ENCODE measurements at regions of chr9 and their contacts with region 1.

Region 1: GRCh38 chr9:137029058-137029936 is 1.3 kb upstream of the ABCA2 start:
- DNase-seq: peak; percentile 49 to 82 (median 64)
- ATAC-seq: peak; percentile 27
- H3K4me3 ChIP-seq: peak overlapping the region; percentile 68
- H3K4me3 Mint-ChIP-seq: peak overlapping the region; percentile 90
- H3K27ac ChIP-seq: peak overlapping the region in 1 of 2 donors; percentile 7
- H3K27ac Mint-ChIP-seq: peak overlapping the region; percentile 55
- H3K4me1 ChIP-seq: peaks cover 82% of the 10 kb centered on the region
- H3K4me1 Mint-ChIP-seq: peaks cover 44% of the 10 kb centered on the region
- H3K27me3 ChIP-seq: no peaks in the 10 kb centered on the region
- H3K27me3 Mint-ChIP-seq: no peaks in the 10 kb centered on the region
- CTCF ChIP-seq: peak; percentile 67

Region 2: DNA sequence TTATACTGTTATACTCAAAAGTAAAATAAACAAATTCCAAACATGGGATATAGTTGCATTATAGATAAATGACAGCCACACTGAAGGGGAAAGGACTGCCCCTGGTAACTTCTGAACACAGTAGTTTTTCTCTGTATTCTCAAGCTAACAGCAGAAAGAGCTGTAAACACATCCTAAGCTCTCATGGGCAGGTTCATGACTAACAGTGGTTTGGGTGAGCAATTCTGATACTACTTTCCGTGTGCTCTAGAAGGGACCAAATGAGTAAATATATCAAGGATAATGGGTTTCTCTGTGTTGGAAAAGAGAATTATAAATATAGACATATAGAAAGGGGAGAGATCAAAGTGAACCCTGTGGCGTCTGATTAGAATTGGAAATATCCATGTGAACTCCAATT is 278.8 kb before region 1 on chr9:
- CTCF ChIA-PET with region 1: no interaction called
- POLR2A ChIA-PET with region 1: no interaction called
- intact Hi-C with region 1: no loop called
- DNase-seq: no peak
- ATAC-seq: no peak
- H3K4me3 ChIP-seq: no peak overlapping the region
- H3K4me3 Mint-ChIP-seq: no peak overlapping the region
- H3K27ac ChIP-seq: no peak overlapping the region
- H3K27ac Mint-ChIP-seq: no peak overlapping the region
- H3K4me1 ChIP-seq: no peaks in the 10 kb centered on the region
- H3K4me1 Mint-ChIP-seq: no peaks in the 10 kb centered on the region
- H3K27me3 ChIP-seq: peaks cover 0 to 2% of the 10 kb centered on the region in 2 experiments
- H3K27me3 Mint-ChIP-seq: peaks cover 15% of the 10 kb centered on the region
- CTCF ChIP-seq: no peak

Region 3: DNA sequence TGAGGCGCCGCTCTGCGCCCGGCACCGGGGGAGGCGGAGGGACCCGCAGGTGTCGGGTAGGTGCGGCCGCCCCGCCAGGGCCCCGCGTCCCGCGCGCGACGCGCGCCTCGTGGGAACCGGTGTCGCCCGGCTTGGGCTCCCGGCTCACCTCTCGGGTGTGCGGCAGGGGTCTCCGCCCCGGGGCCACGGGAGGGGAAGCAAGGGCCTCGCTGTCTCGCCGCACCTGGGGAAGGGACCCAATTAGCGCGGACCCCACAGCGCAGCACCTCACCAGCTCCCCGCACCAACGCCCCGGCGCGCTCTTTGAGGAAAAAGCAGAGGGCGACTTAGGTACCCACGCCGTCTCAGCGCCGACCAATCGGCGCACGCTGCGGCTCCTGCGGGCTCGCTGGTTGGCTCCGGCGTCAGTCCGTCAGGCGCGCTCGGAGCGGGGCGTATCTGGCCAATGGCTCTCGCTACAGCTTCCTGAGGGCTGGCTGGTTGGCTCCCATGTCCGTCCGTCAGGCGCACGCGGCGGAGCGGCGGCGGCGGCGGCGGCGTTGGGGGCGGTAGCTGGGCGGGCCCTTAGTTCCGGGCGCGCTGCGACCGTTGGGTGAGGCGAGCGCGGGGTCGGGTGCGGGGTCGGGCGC is 143.2 kb before region 1 on chr9 and contains the start of gene TRAF2:
- CTCF ChIA-PET with region 1: no interaction called
- POLR2A ChIA-PET with region 1: interaction called, 6 read pairs
- intact Hi-C with region 1: loop called in 1 of 2 experiments (anchors 5 kb)
- DNase-seq: peak; percentile 92 to 99 (median 96)
- ATAC-seq: peak; percentile 92
- H3K4me3 ChIP-seq: peak within 1 kb of the TSS; percentile 85
- H3K4me3 Mint-ChIP-seq: peak within 1 kb of the TSS; percentile 88
- H3K27ac ChIP-seq: peak within 1 kb of the TSS; percentile 81 to 95
- H3K27ac Mint-ChIP-seq: peak within 1 kb of the TSS; percentile 92
- H3K4me1 ChIP-seq: peaks cover 68% of the 10 kb centered on the region
- H3K4me1 Mint-ChIP-seq: peaks cover 26% of the 10 kb centered on the region
- H3K27me3 ChIP-seq: no peaks in the 10 kb centered on the region
- H3K27me3 Mint-ChIP-seq: no peaks in the 10 kb centered on the region
- CTCF ChIP-seq: no peak
- total RNA-seq, gene TRAF2: 10.6 to 11.6 TPM

Region 4: GRCh38 chr9:136949817-136950655 is 79.3 kb before region 1 on chr9:
- CTCF ChIA-PET with region 1: interaction called, 13 read pairs
- POLR2A ChIA-PET with region 1: interaction called, 3 read pairs
- intact Hi-C with region 1: loop called in 1 of 2 experiments (anchors 2 kb)
- DNase-seq: peak; percentile 93 to 97 (median 96)
- ATAC-seq: peak; percentile 97
- H3K4me3 ChIP-seq: peak overlapping the region; percentile 69
- H3K4me3 Mint-ChIP-seq: peak overlapping the region; percentile 83
- H3K27ac ChIP-seq: peak overlapping the region; percentile 56 to 75
- H3K27ac Mint-ChIP-seq: peak overlapping the region; percentile 86
- H3K4me1 ChIP-seq: peaks cover 38% of the 10 kb centered on the region
- H3K4me1 Mint-ChIP-seq: peaks cover 5% of the 10 kb centered on the region
- H3K27me3 ChIP-seq: no peaks in the 10 kb centered on the region
- H3K27me3 Mint-ChIP-seq: no peaks in the 10 kb centered on the region
- CTCF ChIP-seq: peak; percentile 42

Region 5: GRCh38 chr9:137046098-137046787 is 16.9 kb after region 1 on chr9 and contains the start of gene NPDC1:
- CTCF ChIA-PET with region 1: interaction called, 23 read pairs
- POLR2A ChIA-PET with region 1: interaction called, 6 read pairs
- intact Hi-C with region 1: no loop called
- DNase-seq: peak; percentile 67 to 90 (median 75)
- ATAC-seq: peak; percentile 87
- H3K4me3 ChIP-seq: peak within 1 kb of the TSS; percentile 55
- H3K4me3 Mint-ChIP-seq: peak within 1 kb of the TSS; percentile 51
- H3K27ac ChIP-seq: no peak within 1 kb of the TSS
- H3K27ac Mint-ChIP-seq: no peak within 1 kb of the TSS
- H3K4me1 ChIP-seq: peaks cover 44% of the 10 kb centered on the region
- H3K4me1 Mint-ChIP-seq: no peaks in the 10 kb centered on the region
- H3K27me3 ChIP-seq: peaks cover 68 to 69% of the 10 kb centered on the region in 2 experiments
- H3K27me3 Mint-ChIP-seq: peaks cover 44% of the 10 kb centered on the region
- CTCF ChIP-seq: peak; percentile 77
- total RNA-seq, gene NPDC1: 15.3 to 16.0 TPM

Region 6: DNA sequence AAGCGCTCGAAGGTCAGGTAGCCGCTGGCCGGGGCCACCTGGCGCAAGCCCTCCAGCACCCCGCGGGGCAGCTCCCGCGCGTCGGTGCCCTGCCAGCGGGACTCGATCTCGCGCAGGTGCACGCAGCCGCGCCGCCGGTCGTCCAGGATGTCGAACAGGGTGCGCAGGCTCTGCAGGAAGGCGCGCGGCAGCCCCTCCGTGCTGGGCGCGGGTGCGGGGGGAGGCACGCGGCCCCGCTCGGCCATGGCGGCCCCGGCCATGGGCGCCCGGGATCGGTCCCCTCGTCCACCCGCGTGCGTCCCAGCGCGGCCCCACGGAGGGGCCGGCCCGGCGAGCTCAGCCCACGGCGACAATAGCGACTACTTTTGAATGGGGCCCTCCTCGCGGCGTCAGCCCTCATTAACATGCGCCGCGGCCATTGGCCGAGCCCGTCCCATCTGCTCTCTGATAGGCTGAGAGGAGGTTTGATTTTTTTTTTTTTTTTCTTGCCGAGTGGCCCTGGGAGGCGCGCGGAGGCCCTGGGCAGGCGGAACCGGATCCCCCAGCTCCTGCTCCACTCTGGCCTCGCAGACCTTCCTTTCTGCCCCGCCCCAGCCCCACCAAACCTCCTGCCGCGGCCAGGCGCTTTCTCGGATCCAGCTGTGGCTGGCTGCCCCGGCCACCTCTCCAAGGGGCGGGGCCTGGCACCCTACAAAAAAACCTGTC is 41.1 kb after region 1 on chr9 and contains the start of gene SAPCD2:
- CTCF ChIA-PET with region 1: interaction called, 13 read pairs
- POLR2A ChIA-PET with region 1: no interaction called
- intact Hi-C with region 1: loop called in 1 of 2 experiments (anchors 2 kb)
- DNase-seq: peak; percentile 68 to 94 (median 78)
- ATAC-seq: peak; percentile 88
- H3K4me3 ChIP-seq: peak within 1 kb of the TSS; percentile 45
- H3K4me3 Mint-ChIP-seq: peak within 1 kb of the TSS; percentile 82
- H3K27ac ChIP-seq: no peak within 1 kb of the TSS
- H3K27ac Mint-ChIP-seq: peak within 1 kb of the TSS; percentile 24
- H3K4me1 ChIP-seq: peaks cover 28% of the 10 kb centered on the region
- H3K4me1 Mint-ChIP-seq: peaks cover 16% of the 10 kb centered on the region
- H3K27me3 ChIP-seq: peaks cover 0 to 8% of the 10 kb centered on the region in 2 experiments
- H3K27me3 Mint-ChIP-seq: peaks cover 4% of the 10 kb centered on the region
- CTCF ChIP-seq: no peak
- total RNA-seq, gene SAPCD2: 0.17 to 0.19 TPM

Measured in CD4-positive, alpha-beta T cell (primary cell).